Activated naive CD4-positive, alpha-beta T cell treated with anti-CD3 and anti-CD28 coated beads for 36 hours (primary cell): ENCODE measurements at regions of chr6 and their contacts with region 1.

Region 1: DNA sequence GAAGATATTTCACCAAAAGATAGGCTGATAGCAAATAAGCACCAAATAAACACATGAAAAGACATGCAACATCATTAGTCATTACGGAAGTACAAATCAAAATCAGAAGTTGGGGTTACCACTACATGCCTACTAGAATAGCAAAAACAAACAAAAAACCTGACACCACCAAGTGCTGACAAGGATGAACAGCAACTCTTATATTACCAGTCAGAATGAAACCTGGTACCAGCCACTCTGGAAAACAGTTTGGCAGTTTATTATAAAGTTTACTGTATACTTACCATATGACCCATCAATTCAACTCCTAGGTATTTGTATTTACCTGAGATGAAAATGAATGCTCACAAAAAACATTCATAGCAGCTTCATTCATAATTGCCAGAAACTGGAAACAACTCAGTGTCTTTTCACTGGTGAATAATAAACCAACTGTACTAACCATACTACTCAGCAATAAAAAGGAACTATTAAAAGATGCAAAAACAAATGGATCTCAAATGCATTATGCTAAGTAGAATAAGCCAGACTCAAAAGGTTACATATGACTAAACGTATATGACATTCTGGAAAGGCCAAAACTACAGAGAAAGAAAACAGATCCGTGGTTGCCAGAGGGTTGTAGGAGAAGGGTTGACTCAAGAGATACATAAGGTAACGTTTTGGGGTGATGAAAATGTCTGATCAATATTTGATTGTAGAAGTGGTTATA is 33.0 kb downstream of the NUP153 start:
- DNase-seq: no peak
- H3K4me3 Mint-ChIP-seq: no peak overlapping the region
- H3K27ac Mint-ChIP-seq: no peak overlapping the region
- H3K4me1 Mint-ChIP-seq: peaks cover 28% of the 10 kb centered on the region
- H3K27me3 Mint-ChIP-seq: no peaks in the 10 kb centered on the region

Region 2: DNA sequence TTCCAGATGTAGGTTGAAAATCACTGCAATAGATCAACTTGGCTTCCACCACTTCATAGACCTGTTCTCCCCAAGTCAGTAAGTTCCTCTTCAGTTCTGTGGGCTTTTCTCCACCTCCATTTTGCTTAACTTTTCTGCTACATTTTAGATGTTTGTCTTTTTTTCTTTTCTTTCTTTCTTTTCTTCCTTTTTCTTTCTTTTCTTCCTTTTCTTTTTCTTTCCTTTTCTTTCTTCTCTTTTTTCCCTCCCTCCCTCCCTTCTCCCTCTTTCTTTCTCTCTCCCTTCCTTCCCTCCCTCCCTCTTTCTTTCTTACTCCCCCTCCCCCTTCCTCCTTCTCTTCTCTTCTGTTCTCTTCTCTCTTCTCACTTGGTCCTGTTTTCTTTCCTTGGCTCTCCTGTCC is 80.5 kb before region 1 on chr6:
- CTCF ChIA-PET with region 1: no interaction called
- intact Hi-C with region 1: no loop called
- DNase-seq: no peak
- H3K4me3 Mint-ChIP-seq: no peak overlapping the region
- H3K27ac Mint-ChIP-seq: no peak overlapping the region
- H3K4me1 Mint-ChIP-seq: peaks cover 13% of the 10 kb centered on the region
- H3K27me3 Mint-ChIP-seq: no peaks in the 10 kb centered on the region

Region 3: DNA sequence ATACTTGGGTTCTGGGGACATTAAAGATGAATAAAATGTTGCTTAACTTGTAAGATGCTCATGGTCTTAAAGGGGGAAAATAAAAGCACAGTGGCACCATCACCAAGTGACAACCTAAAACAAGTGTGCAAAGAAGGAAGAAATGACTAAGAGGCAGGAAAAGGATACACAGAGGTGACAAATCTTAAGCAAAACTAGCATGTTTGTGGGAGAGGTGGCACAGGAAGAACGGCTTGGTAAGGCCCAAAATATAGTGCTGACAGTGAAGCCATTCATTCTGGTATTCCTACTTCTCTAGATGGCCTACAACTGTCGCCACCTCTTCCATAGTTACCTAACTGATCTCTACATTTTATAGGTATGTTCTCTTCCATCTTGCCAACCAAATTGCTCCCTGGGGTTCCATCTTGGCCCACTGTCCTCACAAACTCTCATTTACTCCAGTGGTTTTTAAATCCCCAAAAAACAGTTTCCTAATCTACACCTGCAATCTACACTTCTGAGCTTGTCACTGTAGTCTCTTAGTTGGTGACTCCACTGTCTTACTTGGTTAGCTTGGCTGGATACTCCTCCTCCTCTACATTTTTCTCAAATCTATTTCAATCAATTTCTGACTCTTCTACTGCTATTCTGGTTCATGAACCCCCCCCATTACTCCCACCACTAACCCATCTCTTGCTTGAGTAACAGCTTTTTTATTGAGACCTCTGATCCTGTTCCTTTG is 40.1 kb before region 1 on chr6:
- CTCF ChIA-PET with region 1: interaction called, 4 read pairs
- intact Hi-C with region 1: loop called (anchors 5 kb)
- DNase-seq: peak; percentile 50
- H3K4me3 Mint-ChIP-seq: no peak overlapping the region
- H3K27ac Mint-ChIP-seq: peak overlapping the region; percentile 76
- H3K4me1 Mint-ChIP-seq: peaks cover 47% of the 10 kb centered on the region
- H3K27me3 Mint-ChIP-seq: no peaks in the 10 kb centered on the region

Region 4: GRCh38 chr6:18264219-18264922 is 590.7 kb after region 1 on chr6 and contains the start of gene DEK:
- CTCF ChIA-PET with region 1: no interaction called
- intact Hi-C with region 1: no loop called
- DNase-seq: peak; percentile 91
- H3K4me3 Mint-ChIP-seq: peak within 1 kb of the TSS; percentile 96
- H3K27ac Mint-ChIP-seq: peak within 1 kb of the TSS; percentile 98
- H3K4me1 Mint-ChIP-seq: peaks cover 47% of the 10 kb centered on the region
- H3K27me3 Mint-ChIP-seq: no peaks in the 10 kb centered on the region
- total RNA-seq, gene DEK: 200 to 203 TPM